ENCODE measurements at regions of chr2 and their contacts with region 1.

Region 1: DNA sequence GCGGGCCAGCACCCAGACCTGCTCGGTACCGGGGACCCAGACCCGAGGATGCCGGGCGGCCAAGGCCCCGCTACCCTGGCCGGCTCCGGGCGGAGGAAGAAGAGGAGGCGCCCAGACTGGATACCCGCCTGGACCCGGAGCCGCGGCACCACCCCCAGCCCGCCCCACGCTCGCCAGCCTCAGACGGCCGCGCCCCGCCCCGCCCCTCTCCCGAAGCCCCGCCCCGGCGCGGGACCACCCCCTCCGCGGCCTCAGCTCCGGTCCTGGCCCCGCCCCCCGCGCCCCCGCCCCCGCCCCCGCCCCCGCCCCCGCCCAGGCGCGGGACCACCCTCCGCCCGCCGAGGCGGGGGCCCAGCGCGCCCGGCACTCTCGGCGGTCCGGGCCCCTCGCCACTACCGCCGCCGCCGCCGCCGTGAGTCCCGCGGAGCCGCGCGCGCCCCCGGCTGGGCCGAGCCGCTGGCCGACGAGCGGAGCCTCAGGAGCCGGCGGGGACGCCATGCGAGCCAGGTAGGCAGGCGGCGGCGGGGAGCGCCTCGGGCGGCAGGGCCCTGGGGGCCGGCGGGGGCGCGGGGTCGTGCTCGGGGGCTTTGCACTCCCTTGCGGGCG is at the start of gene SH3BP4:
- DNase-seq: peak; percentile 85 to 96 (median 90)
- ATAC-seq: peak; percentile 70 to 84 (median 80)
- H3K4me3 ChIP-seq: peak within 1 kb of the TSS; percentile 70 to 96 (median 83)
- H3K27ac ChIP-seq: peak within 1 kb of the TSS; percentile 77 to 90 (median 88)
- H3K4me1 ChIP-seq: peaks cover 7 to 13% (median 12%) of the 10 kb centered on the region in 3 donors
- H3K27me3 ChIP-seq: no peaks in the 10 kb centered on the region
- CTCF ChIP-seq: no peak
- total RNA-seq, gene SH3BP4: 61.6 to 99.7 (median 64.0) TPM

Region 2: GRCh38 chr2:234840336-234840735 is 111.4 kb before region 1 on chr2:
- intact Hi-C with region 1: no loop called
- DNase-seq: peak in 2 of 6 donors; percentile 34 to 37
- ATAC-seq: peak; percentile 80 to 93 (median 86)
- H3K4me3 ChIP-seq: no peak overlapping the region
- H3K27ac ChIP-seq: peak overlapping the region in 1 of 4 donors; percentile 12
- H3K4me1 ChIP-seq: peaks cover 0 to 10% (median 1%) of the 10 kb centered on the region in 3 donors
- H3K27me3 ChIP-seq: no peaks in the 10 kb centered on the region
- CTCF ChIP-seq: no peak

Region 3: DNA sequence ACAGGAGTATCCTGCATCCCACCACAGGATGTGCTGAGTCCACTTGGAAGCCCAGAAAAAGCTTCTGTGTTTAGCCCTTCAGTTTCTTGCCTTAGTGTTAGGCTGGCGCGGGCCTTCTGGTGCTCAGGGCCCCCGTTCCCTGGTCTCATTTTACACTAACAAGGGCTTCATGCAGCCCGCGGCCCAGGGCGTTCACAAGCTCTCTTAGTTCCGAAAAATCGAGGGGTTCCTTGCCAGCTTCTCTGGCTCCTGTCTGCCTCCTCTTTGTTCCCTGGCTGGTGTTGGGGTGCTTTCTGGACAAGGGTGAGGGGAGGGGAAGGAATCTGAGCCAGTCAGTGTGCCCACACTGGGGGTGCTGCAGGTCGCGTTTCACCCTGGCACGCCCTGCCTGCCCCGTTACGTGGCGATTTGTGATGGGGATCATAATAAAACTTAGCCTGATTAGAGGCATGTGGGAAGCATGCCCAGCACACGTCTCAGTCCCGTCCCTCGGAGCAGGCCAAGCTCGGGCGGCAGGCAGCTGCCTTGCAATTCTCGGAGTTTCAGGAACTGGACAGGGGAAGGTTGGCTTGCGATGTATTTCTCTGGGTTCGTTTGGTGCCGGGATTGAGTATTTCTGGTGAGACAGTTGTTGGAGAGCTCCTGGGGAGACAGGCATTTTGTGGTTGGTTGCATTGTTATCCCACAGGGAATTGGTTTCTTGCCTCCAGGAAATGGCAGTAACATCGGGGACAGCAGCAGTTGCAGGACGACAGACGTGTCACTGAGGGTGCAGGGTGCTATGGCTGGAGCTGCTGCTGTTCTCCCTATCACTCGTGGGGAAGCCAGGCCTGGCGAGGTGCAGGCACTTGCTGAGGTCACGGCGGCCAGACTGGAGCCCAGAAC is 23.0 kb after region 1 on chr2:
- intact Hi-C with region 1: no loop called
- DNase-seq: peak in 5 of 6 donors; percentile 60 to 86 (median 65)
- ATAC-seq: peak; percentile 51 to 70 (median 62)
- H3K4me3 ChIP-seq: peak overlapping the region in 1 of 4 donors; percentile 3
- H3K27ac ChIP-seq: peak overlapping the region; percentile 36 to 87 (median 69)
- H3K4me1 ChIP-seq: peaks cover 53 to 65% (median 55%) of the 10 kb centered on the region in 3 donors
- H3K27me3 ChIP-seq: no peaks in the 10 kb centered on the region
- CTCF ChIP-seq: no peak

Region 4: GRCh38 chr2:234996069-234996940 is 44.5 kb after region 1 on chr2:
- intact Hi-C with region 1: loop called in 1 of 3 experiments (anchors 5 kb)
- DNase-seq: peak in 1 of 6 donors; percentile 43
- ATAC-seq: peak in 2 of 4 donors; percentile 3 to 4
- H3K4me3 ChIP-seq: no peak overlapping the region
- H3K27ac ChIP-seq: peak overlapping the region; percentile 32 to 69 (median 57)
- H3K4me1 ChIP-seq: peaks cover 57 to 73% (median 59%) of the 10 kb centered on the region in 3 donors
- H3K27me3 ChIP-seq: no peaks in the 10 kb centered on the region
- CTCF ChIP-seq: no peak

Region 5: GRCh38 chr2:235045336-235045972 is 93.7 kb after region 1 on chr2:
- intact Hi-C with region 1: loop called in 1 of 3 experiments (anchors 10 kb)
- DNase-seq: peak in 2 of 6 donors; percentile 49 to 55
- ATAC-seq: peak in 2 of 4 donors; percentile 7 to 8
- H3K4me3 ChIP-seq: peak overlapping the region in 1 of 4 donors; percentile 6
- H3K27ac ChIP-seq: peak overlapping the region; percentile 35 to 87 (median 66)
- H3K4me1 ChIP-seq: peaks cover 52 to 66% (median 54%) of the 10 kb centered on the region in 3 donors
- H3K27me3 ChIP-seq: no peaks in the 10 kb centered on the region
- CTCF ChIP-seq: no peak

Region 6: GRCh38 chr2:235287375-235287733 is 335.6 kb after region 1 on chr2:
- intact Hi-C with region 1: no loop called
- DNase-seq: no peak
- ATAC-seq: no peak
- H3K4me3 ChIP-seq: no peak overlapping the region
- H3K27ac ChIP-seq: no peak overlapping the region
- H3K4me1 ChIP-seq: no peaks in the 10 kb centered on the region
- H3K27me3 ChIP-seq: no peaks in the 10 kb centered on the region
- CTCF ChIP-seq: no peak